Motor neuron (in vitro differentiated cells): ENCODE measurements at regions of chrX and their contacts with region 1.

Region 1: DNA sequence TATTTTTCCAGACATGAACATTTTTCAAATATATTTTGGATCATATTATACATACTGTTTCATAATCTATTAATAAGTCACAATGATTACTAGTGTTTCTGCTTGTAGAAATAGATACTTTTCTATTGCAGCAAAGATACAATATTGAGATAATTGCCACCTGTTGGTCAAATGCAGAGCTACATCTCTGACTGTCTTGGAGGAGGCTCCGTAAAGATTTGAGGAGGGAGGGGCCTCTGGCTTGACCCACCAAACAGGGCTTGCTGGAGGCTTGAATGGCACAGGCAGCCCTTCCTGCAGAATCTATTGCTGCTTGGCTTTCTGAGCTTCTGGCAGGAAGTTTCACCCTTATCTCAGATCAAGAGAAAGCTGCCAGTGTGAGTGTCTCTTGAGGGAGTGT is 99.3 kb upstream of the ARMCX2 start:
- ATAC-seq: peak in 4 of 8 experiments; percentile 40 to 84 (median 53)
- H3K4me3 ChIP-seq: no peak overlapping the region
- H3K27ac ChIP-seq: no peak overlapping the region
- H3K4me1 ChIP-seq: no peaks in the 10 kb centered on the region

Region 2: DNA sequence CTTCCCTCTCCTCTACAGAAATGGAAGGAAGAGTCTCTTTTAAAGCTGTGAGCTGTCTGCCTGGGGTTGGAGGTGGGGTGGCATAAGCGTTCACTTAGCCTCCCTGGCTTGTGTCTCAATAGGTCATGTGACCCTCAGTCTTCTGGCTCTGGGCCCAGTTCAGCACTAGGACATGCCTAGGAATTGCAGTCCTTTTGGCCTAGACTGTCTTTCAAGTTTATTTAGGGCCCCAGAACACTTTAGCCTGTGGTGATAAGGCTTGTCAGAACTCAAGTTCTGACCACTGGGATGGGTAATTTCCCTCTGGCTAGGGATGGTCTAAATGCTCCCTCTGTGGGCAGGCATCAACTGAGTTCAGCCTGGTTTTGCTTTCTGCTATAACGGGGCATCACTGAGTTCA is 308.0 kb before region 1 on chrX:
- in situ Hi-C with region 1: no loop called
- ATAC-seq: peak in 3 of 8 experiments; percentile 51 to 97 (median 95)
- H3K4me3 ChIP-seq: no peak overlapping the region
- H3K27ac ChIP-seq: no peak overlapping the region
- H3K4me1 ChIP-seq: no peaks in the 10 kb centered on the region

Region 3: GRCh38 chrX:101642093-101642492 is 116.9 kb before region 1 on chrX:
- in situ Hi-C with region 1: loop called in 1 of 9 experiments (anchors 25 kb)
- ATAC-seq: peak in 3 of 8 experiments; percentile 9 to 20 (median 12)
- H3K4me3 ChIP-seq: no peak overlapping the region
- H3K27ac ChIP-seq: no peak overlapping the region
- H3K4me1 ChIP-seq: peaks cover 0 to 2% of the 10 kb centered on the region in 2 donors

Region 4: GRCh38 chrX:101906136-101906796 is 147.3 kb after region 1 on chrX:
- in situ Hi-C with region 1: no loop called
- ATAC-seq: no peak
- H3K4me3 ChIP-seq: no peak overlapping the region
- H3K27ac ChIP-seq: no peak overlapping the region
- H3K4me1 ChIP-seq: no peaks in the 10 kb centered on the region

Region 5: DNA sequence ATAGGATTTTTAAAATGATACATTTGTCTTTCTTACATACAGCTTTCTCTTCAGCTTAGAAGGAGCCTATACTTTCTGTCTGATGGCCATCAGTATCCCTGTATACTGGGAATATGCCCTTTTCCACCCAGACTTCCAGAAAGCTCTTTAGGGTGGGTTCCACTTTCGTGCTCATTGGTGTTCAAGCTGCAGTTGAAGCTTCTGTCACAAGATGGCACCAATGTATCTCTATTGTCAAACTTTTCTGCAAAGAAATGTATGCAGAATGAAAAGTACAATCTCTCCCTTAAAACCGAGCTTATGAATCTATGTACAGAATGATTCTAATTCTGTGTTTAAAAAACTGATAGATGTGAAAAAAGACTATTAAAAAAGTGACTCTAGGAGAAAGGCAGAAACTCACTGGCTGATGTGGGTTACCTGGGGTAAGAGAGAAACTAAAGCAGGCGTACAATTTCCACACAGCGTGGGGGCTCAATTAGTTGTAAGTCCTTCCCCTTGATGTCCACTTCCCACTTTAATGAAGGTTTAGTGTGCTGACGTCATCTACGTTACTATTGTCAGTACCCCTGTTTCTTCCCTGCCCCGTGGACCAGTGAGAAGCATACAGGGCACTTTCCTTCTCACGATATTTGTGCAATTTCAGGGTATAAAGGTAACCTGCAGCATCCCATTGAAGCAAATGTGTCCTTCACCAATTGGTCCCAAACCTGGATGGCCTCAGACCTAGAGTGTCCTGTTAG is 309.1 kb after region 1 on chrX:
- in situ Hi-C with region 1: no loop called
- ATAC-seq: no peak
- H3K4me3 ChIP-seq: no peak overlapping the region
- H3K27ac ChIP-seq: no peak overlapping the region
- H3K4me1 ChIP-seq: no peaks in the 10 kb centered on the region